ENCODE measurements at regions of chr7 and their contacts with region 1.

Region 1: GRCh38 chr7:45658716-45659495 is 84.7 kb downstream of the ADCY1 start:
- DNase-seq: no peak
- ATAC-seq: no peak
- H3K4me3 ChIP-seq: no peak overlapping the region
- H3K27ac ChIP-seq: no peak overlapping the region
- H3K4me1 ChIP-seq: no peaks in the 10 kb centered on the region
- H3K27me3 ChIP-seq: no peaks in the 10 kb centered on the region

Region 2: DNA sequence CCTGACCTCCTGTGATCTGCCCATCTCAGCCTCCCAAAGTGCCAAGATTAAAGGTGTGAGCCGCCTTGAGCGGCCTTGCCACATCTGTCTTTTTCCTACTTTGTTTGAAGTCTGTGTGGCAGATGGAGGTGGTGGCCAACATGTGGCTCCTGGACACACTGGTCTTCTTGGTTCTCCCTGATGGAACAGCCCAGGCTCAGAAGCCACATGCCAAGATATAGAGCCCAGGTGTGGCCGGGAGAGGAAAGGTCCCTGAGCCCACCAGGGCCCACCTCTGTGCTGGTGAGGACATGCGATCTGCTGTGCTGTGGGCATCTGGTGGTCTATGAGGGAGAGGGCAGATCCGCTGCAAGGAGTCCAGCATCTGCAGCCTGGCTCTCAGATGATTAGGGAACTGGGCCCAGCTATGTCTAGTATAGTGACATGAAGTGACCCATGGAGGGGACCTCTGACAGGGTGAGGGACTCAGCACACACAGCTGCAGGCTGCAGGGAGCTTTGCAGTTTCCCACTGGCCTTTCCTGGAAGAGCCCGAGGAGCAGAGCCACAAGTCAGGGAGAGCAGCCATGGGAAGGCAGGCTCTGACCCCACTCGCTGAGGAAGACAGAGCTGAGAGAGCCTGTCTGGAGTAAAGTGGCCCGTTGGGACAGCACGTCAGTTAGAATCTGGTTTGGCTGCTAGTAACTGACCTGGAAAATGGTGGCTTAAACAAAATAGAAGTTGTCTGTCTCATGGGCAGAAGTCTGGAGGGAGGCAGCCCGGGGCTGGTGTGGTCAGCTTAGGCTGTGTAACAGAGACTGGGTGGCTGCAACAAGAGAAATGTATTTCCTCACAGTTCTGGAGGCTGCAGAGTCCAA is 58.8 kb before region 1 on chr7:
- intact Hi-C with region 1: no loop called
- DNase-seq: no peak
- ATAC-seq: peak; percentile 39 to 48
- H3K4me3 ChIP-seq: no peak overlapping the region
- H3K27ac ChIP-seq: no peak overlapping the region
- H3K4me1 ChIP-seq: no peaks in the 10 kb centered on the region
- H3K27me3 ChIP-seq: no peaks in the 10 kb centered on the region

Region 3: GRCh38 chr7:45863715-45864114 is 204.8 kb after region 1 on chr7:
- intact Hi-C with region 1: loop called in 1 of 4 experiments (anchors 10 kb)
- DNase-seq: no peak
- ATAC-seq: no peak
- H3K4me3 ChIP-seq: no peak overlapping the region
- H3K27ac ChIP-seq: no peak overlapping the region
- H3K4me1 ChIP-seq: no peaks in the 10 kb centered on the region
- H3K27me3 ChIP-seq: peaks cover 2% of the 10 kb centered on the region